Activated T-helper 2 cell treated with anti-CD3 and anti-CD28 coated beads, Interferon-gamma antibody, Interleukin-2, Interleukin-4, amounts not matched to agents 10 μg/mL and 5 μg/mL and 100 μg/mL, durations not matched to agents 14 hours and 24 hours and 36 hours (primary cell): ENCODE measurements at regions of chr5 and their contacts with region 1.

Region 1: GRCh38 chr5:91280362-91281269 is 102.5 kb downstream of the ARRDC3 start:
- DNase-seq: peak; percentile 79
- H3K4me3 Mint-ChIP-seq: peak overlapping the region; percentile 81
- H3K27ac Mint-ChIP-seq: peak overlapping the region; percentile 96
- H3K4me1 Mint-ChIP-seq: peaks cover 36% of the 10 kb centered on the region
- H3K27me3 Mint-ChIP-seq: peaks cover 10% of the 10 kb centered on the region

Region 2: GRCh38 chr5:90956511-90957097 is 324.0 kb before region 1 on chr5:
- intact Hi-C with region 1: loop called (anchors 2 kb)
- DNase-seq: no peak
- H3K4me3 Mint-ChIP-seq: peak overlapping the region; percentile 1
- H3K27ac Mint-ChIP-seq: peak overlapping the region; percentile 91
- H3K4me1 Mint-ChIP-seq: peaks cover 22% of the 10 kb centered on the region
- H3K27me3 Mint-ChIP-seq: no peaks in the 10 kb centered on the region

Region 3: GRCh38 chr5:91101600-91102379 is 178.8 kb before region 1 on chr5:
- intact Hi-C with region 1: loop called (anchors 5 kb)
- DNase-seq: peak; percentile 33
- H3K4me3 Mint-ChIP-seq: no peak overlapping the region
- H3K27ac Mint-ChIP-seq: no peak overlapping the region
- H3K4me1 Mint-ChIP-seq: peaks cover 2% of the 10 kb centered on the region
- H3K27me3 Mint-ChIP-seq: peaks cover 9% of the 10 kb centered on the region

Region 4: DNA sequence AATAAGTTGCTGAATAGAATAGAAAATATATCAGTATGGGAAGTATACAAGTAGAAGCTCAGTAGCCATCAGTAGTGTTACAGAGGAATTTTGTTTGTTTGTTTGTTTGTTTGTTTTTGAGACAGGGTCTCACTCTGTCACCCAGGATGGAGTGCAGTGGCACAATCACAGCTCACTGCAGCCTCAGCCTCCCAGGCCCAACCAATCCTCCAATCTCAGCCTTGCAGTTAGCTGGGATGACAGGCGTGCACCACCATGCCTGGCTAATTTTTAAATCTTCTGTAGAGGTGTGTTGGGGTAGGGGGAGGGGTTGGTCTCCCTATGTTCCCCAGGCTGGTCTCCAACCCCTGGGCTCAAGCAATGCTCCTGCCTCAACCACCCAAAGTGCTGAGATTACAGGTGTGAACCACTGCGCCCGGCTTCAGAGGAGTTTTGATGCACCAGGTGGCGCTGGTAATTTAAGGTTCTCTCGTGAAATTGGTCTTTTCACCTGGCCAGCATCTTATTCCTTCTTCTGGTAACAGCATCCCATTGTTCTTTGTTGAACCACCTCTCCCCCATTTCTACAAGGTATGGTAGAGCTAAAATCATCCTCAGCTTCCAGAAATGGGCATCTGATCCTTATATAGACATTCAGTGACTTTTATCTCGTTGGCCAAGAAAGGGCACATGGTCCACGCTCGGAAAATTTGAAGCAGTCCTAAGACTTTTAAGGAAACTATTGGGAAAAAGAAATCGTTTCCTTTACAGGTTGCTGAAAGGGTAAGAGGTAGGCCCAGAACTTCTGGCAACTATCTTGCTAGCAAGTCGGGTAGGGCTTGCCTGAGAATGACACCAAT is 54.5 kb before region 1 on chr5:
- intact Hi-C with region 1: loop called (anchors 5 kb)
- DNase-seq: peak; percentile 26
- H3K4me3 Mint-ChIP-seq: no peak overlapping the region
- H3K27ac Mint-ChIP-seq: no peak overlapping the region
- H3K4me1 Mint-ChIP-seq: peaks cover 4% of the 10 kb centered on the region
- H3K27me3 Mint-ChIP-seq: peaks cover 18% of the 10 kb centered on the region

Region 5: DNA sequence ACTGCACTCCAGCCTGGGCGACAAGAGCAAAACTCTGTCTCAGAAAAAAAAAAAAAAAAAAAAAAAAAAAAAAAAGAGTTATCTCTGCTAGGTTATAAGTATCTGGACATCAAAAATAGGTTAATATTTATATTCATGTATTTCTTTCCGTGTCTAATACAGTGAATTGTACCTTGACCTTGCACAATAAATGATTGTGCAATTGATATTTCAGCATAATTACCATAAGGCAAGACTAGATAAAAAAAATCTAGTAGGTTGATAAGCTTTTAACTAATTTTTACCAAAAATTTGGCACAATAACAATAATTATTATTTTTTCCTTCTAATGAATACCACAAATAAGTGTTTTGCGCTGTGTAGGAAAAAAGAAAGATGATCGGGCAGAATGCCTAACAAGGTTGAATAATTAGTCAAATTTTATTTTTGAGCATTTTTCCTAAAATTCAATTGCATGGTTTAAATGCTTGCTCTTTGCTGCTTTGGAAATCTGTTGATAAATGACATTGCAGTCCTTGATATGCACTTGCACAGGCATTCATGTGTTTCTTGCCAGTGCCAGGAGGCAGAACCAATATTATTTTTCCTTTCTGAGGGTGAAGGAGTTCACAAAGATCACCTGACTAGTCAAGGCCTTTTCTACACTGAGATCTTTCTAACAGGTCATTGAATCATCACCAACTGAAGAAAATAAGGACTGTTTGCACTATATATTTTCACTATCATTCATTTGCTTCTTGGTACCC is 25.0 kb before region 1 on chr5:
- intact Hi-C with region 1: no loop called
- DNase-seq: no peak
- H3K4me3 Mint-ChIP-seq: no peak overlapping the region
- H3K27ac Mint-ChIP-seq: no peak overlapping the region
- H3K4me1 Mint-ChIP-seq: no peaks in the 10 kb centered on the region
- H3K27me3 Mint-ChIP-seq: peaks cover 19% of the 10 kb centered on the region

Region 6: GRCh38 chr5:91266184-91266705 is 14.4 kb before region 1 on chr5:
- intact Hi-C with region 1: loop called (anchors 1 kb)
- DNase-seq: no peak
- H3K4me3 Mint-ChIP-seq: no peak overlapping the region
- H3K27ac Mint-ChIP-seq: no peak overlapping the region
- H3K4me1 Mint-ChIP-seq: peaks cover 25% of the 10 kb centered on the region
- H3K27me3 Mint-ChIP-seq: peaks cover 2% of the 10 kb centered on the region

Region 7: DNA sequence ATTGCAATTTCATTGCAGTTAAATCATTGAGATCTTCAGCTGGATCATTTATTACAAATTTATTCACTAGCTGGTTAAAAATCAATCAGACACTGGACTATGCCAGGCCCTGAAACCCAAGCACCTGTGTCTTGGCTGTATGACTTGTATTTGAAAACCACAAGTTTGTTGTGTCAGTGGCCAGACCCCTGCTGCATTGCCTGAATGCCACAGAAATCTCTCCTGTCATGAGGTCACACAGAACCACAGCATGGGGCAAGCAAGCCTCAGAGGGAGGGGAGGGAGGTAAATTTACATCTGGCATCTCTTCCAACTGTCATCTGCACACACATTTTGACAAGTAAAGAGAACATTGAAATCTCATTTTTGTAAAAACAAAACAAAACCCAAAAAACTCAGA is 12.5 kb after region 1 on chr5:
- intact Hi-C with region 1: loop called (anchors 1 kb)
- DNase-seq: no peak
- H3K4me3 Mint-ChIP-seq: no peak overlapping the region
- H3K27ac Mint-ChIP-seq: no peak overlapping the region
- H3K4me1 Mint-ChIP-seq: peaks cover 20% of the 10 kb centered on the region
- H3K27me3 Mint-ChIP-seq: peaks cover 2% of the 10 kb centered on the region

Region 8: DNA sequence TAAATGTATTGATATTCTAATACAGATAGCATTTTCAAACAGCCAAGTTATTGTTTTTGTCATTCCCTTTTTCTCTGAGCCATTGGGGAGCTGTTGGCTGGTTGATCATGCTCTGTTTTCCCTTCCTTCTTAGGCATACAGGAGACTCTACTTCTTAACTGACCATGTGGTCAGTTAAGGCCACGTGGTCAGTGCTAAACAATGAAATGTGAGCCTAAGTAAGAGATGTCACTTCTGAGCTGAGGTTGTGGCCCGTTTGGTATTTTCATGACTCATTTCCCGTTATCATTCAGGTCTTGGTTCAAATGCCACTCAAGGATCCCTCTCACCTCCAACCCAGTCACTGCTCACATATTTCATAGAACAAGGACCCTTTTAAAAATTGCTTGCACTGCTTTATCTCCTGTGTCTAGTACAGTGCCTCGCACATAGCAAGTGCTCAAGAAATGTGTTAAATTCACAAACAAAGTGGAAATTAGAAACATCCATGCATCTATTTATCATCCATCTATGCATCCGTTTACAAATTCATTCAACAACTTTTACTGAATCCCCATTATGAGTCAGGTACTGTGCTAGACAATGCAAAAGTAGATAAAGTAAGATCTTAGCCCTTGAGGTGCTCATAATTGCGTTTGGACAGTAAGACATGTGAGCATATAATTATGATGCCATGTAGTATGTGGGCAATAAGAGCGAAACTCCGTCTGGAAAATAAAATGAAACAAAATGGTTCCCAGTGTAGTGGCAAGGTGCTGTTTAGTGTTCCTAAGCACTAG is 51.8 kb after region 1 on chr5:
- intact Hi-C with region 1: loop called (anchors 2 kb)
- DNase-seq: no peak
- H3K4me3 Mint-ChIP-seq: no peak overlapping the region
- H3K27ac Mint-ChIP-seq: peak overlapping the region; percentile 6
- H3K4me1 Mint-ChIP-seq: peaks cover 30% of the 10 kb centered on the region
- H3K27me3 Mint-ChIP-seq: peaks cover 25% of the 10 kb centered on the region